Activated CD4-positive, alpha-beta T cell treated with anti-CD3 and anti-CD28 coated beads, Interleukin-2, amount 10 ng/mL, durations not matched to agents 24 days and 14 days (primary cell): ENCODE measurements at regions of chr14 and their contacts with region 1.

Region 1: GRCh38 chr14:65412032-65412846 is at the start of gene FUT8:
- DNase-seq: peak; percentile 97
- H3K4me3 Mint-ChIP-seq: peak within 1 kb of the TSS; percentile 99
- H3K27ac Mint-ChIP-seq: peak within 1 kb of the TSS; percentile 96
- H3K4me1 Mint-ChIP-seq: peaks cover 38% of the 10 kb centered on the region
- H3K27me3 Mint-ChIP-seq: no peaks in the 10 kb centered on the region
- total RNA-seq, gene FUT8: 125 and 137 TPM in 2 replicates

Region 2: DNA sequence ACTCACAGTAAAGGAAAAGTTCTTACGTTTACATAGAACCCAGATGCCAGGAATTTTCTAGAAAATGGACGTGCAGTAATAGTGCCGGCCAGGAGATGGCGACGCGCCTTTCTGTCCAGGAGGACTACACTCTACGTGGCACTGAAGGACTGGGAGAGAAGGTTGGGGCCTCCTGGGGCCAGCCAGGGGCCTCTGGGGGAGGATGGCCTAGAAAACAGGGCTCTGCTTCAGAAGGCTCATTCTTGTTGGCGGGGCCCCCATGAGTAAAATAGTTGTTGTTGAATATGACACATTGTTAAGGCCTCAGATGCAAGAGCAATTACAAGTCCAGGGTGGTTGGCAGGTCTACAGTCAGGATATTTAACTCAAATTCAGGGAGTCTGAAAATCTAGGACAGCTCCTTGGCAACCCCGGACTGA is 189.8 kb before region 1 on chr14:
- intact Hi-C with region 1: loop called (anchors 1 kb)
- DNase-seq: peak; percentile 86
- H3K4me3 Mint-ChIP-seq: no peak overlapping the region
- H3K27ac Mint-ChIP-seq: peak overlapping the region; percentile 2
- H3K4me1 Mint-ChIP-seq: peaks cover 45% of the 10 kb centered on the region
- H3K27me3 Mint-ChIP-seq: no peaks in the 10 kb centered on the region

Region 3: GRCh38 chr14:65336191-65336591 is 76.0 kb before region 1 on chr14:
- intact Hi-C with region 1: loop called (anchors 2 kb)
- DNase-seq: peak; percentile 88
- H3K4me3 Mint-ChIP-seq: peak overlapping the region; percentile 90
- H3K27ac Mint-ChIP-seq: peak overlapping the region; percentile 98
- H3K4me1 Mint-ChIP-seq: peaks cover 55% of the 10 kb centered on the region
- H3K27me3 Mint-ChIP-seq: no peaks in the 10 kb centered on the region

Region 4: GRCh38 chr14:65438266-65438933 is 26.2 kb after region 1 on chr14:
- intact Hi-C with region 1: loop called (anchors 1 kb)
- DNase-seq: no peak
- H3K4me3 Mint-ChIP-seq: peak overlapping the region; percentile 67
- H3K27ac Mint-ChIP-seq: peak overlapping the region; percentile 73
- H3K4me1 Mint-ChIP-seq: peaks cover 34% of the 10 kb centered on the region
- H3K27me3 Mint-ChIP-seq: no peaks in the 10 kb centered on the region

Region 5: GRCh38 chr14:65791191-65791981 is 379.1 kb after region 1 on chr14:
- intact Hi-C with region 1: no loop called
- DNase-seq: no peak
- H3K4me3 Mint-ChIP-seq: no peak overlapping the region
- H3K27ac Mint-ChIP-seq: no peak overlapping the region
- H3K4me1 Mint-ChIP-seq: no peaks in the 10 kb centered on the region
- H3K27me3 Mint-ChIP-seq: peaks cover 15% of the 10 kb centered on the region

Region 6: GRCh38 chr14:66070509-66071319 is 658.5 kb after region 1 on chr14:
- intact Hi-C with region 1: loop called (anchors 2 kb)
- DNase-seq: peak; percentile 92
- H3K4me3 Mint-ChIP-seq: no peak overlapping the region
- H3K27ac Mint-ChIP-seq: no peak overlapping the region
- H3K4me1 Mint-ChIP-seq: peaks cover 5% of the 10 kb centered on the region
- H3K27me3 Mint-ChIP-seq: peaks cover 9% of the 10 kb centered on the region